ENCODE measurements at regions of chr6 and their contacts with region 1.

Region 1: GRCh38 chr6:32825966-32826365 is 9.2 kb upstream of the HLA-DOB start:
- DNase-seq: peak in 1 of 35 experiments; percentile 33
- ATAC-seq: no peak
- H3K4me3 ChIP-seq: no peak overlapping the region
- H3K4me3 Mint-ChIP-seq: no peak overlapping the region
- H3K27ac ChIP-seq: no peak overlapping the region
- H3K27ac Mint-ChIP-seq: no peak overlapping the region
- H3K4me1 ChIP-seq: no peaks in the 10 kb centered on the region
- H3K4me1 Mint-ChIP-seq: peaks cover 4 to 8% (median 6%) of the 10 kb centered on the region in 3 donors
- H3K27me3 ChIP-seq: no peaks in the 10 kb centered on the region
- H3K27me3 Mint-ChIP-seq: no peaks in the 10 kb centered on the region

Region 2: GRCh38 chr6:32369675-32370074 is 456.3 kb before region 1 on chr6:
- CTCF ChIA-PET with region 1: no interaction called
- POLR2A ChIA-PET with region 1: no interaction called
- DNase-seq: no peak
- ATAC-seq: no peak
- H3K4me3 ChIP-seq: no peak overlapping the region
- H3K4me3 Mint-ChIP-seq: no peak overlapping the region
- H3K27ac ChIP-seq: no peak overlapping the region
- H3K27ac Mint-ChIP-seq: no peak overlapping the region
- H3K4me1 ChIP-seq: no peaks in the 10 kb centered on the region
- H3K4me1 Mint-ChIP-seq: no peaks in the 10 kb centered on the region
- H3K27me3 ChIP-seq: peaks cover 2 to 12% of the 10 kb centered on the region in 2 experiments
- H3K27me3 Mint-ChIP-seq: peaks cover 30 to 33% of the 10 kb centered on the region in 2 donors

Region 3: DNA sequence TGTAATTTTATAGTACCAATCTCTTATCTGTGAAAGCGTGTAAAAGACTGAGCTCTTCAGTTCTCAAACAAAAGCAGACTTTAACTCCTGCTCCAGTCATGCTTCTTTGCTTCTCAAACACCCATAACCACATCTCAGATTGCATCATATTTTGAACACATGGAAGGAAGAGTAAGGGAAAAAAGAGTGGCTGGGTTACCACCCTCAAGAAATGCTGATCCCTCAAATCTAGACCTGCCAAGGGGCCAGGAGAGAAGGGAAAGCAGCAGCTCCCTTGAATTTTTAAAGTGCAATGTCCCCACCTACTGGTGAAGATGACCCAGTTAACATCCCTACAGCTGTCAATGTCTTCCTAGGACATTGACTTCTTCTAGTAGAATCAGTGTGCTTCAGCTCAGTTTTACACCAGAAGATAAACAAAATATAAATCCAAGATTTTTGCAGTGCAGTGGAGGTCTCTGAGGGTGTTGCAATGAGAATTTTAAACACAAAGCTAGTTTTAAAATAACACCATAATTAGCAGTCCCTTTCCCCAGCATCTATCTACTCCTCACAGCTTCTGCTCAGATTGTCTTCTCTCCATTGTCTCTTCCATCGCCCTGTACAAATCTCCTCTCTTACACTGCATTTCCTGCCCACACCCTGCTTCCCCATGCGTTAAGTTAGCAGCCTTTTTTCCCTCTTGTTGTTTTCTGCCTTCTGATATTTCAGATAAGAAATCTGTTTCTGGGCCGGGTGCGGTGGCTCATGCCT is 40.0 kb before region 1 on chr6:
- CTCF ChIA-PET with region 1: interaction called in 1 of 2 experiments, 3 read pairs
- POLR2A ChIA-PET with region 1: interaction called in 1 of 2 experiments, 14 read pairs
- DNase-seq: peak in 12 of 35 experiments; percentile 8 to 66 (median 18)
- ATAC-seq: peak in 3 of 4 experiments; percentile 53 to 71 (median 67)
- H3K4me3 ChIP-seq: no peak overlapping the region
- H3K4me3 Mint-ChIP-seq: no peak overlapping the region
- H3K27ac ChIP-seq: no peak overlapping the region
- H3K27ac Mint-ChIP-seq: no peak overlapping the region
- H3K4me1 ChIP-seq: no peaks in the 10 kb centered on the region
- H3K4me1 Mint-ChIP-seq: no peaks in the 10 kb centered on the region
- H3K27me3 ChIP-seq: no peaks in the 10 kb centered on the region
- H3K27me3 Mint-ChIP-seq: peaks cover 41 to 43% of the 10 kb centered on the region in 2 donors

Region 4: DNA sequence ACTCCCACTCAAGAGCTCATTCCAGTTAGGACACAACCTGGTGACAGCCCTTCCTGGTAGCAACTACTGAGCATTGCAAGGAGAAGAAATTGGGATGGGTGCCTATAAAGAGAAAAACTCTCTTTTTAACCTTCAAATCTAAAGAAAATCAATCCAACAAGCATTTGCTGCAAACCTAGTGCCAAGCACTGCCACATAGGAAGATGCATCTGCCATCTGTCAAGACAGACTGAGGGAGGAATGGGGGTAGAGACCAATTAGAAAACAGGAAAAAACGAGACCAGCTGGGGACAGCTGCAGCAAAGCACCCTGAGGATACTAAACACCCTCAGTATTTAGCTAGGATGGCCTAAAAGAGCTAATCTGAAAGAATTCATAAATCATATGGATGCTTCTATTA is 87.0 kb after region 1 on chr6:
- CTCF ChIA-PET with region 1: no interaction called
- POLR2A ChIA-PET with region 1: no interaction called
- DNase-seq: no peak
- ATAC-seq: no peak
- H3K4me3 ChIP-seq: no peak overlapping the region
- H3K4me3 Mint-ChIP-seq: no peak overlapping the region
- H3K27ac ChIP-seq: no peak overlapping the region
- H3K27ac Mint-ChIP-seq: no peak overlapping the region
- H3K4me1 ChIP-seq: no peaks in the 10 kb centered on the region
- H3K4me1 Mint-ChIP-seq: peaks cover 0 to 4% (median 0%) of the 10 kb centered on the region in 3 donors
- H3K27me3 ChIP-seq: peaks cover 0 to 4% of the 10 kb centered on the region in 2 experiments
- H3K27me3 Mint-ChIP-seq: peaks cover 8 to 16% of the 10 kb centered on the region in 2 donors